ENCODE measurements at regions of chr2 and their contacts with region 1.

Region 1: GRCh38 chr2:171416009-171416926 is 17.5 kb downstream of the METTL8 start:
- DNase-seq: peak; percentile 89
- ATAC-seq: peak; percentile 100
- H3K4me3 ChIP-seq: no peak overlapping the region
- H3K27ac ChIP-seq: peak overlapping the region; percentile 48; the same call in 1 of the 2 replicates
- H3K4me1 ChIP-seq: peaks cover 9% of the 10 kb centered on the region
- H3K27me3 ChIP-seq: no peaks in the 10 kb centered on the region
- CTCF ChIP-seq: peak; percentile 92

Region 2: GRCh38 chr2:170973492-170974303 is 442.6 kb before region 1 on chr2:
- CTCF ChIA-PET with region 1: interaction called, 4 read pairs
- POLR2A ChIA-PET with region 1: interaction called, 3 read pairs
- in situ Hi-C with region 1: no loop called
- intact Hi-C with region 1: loop called (anchors 1 kb)
- DNase-seq: peak; percentile 47
- ATAC-seq: peak; percentile 95
- H3K4me3 ChIP-seq: peak overlapping the region; percentile 69 to 84
- H3K27ac ChIP-seq: peak overlapping the region; percentile 45
- H3K4me1 ChIP-seq: peaks cover 15% of the 10 kb centered on the region
- H3K27me3 ChIP-seq: no peaks in the 10 kb centered on the region
- CTCF ChIP-seq: peak; percentile 98

Region 3: DNA sequence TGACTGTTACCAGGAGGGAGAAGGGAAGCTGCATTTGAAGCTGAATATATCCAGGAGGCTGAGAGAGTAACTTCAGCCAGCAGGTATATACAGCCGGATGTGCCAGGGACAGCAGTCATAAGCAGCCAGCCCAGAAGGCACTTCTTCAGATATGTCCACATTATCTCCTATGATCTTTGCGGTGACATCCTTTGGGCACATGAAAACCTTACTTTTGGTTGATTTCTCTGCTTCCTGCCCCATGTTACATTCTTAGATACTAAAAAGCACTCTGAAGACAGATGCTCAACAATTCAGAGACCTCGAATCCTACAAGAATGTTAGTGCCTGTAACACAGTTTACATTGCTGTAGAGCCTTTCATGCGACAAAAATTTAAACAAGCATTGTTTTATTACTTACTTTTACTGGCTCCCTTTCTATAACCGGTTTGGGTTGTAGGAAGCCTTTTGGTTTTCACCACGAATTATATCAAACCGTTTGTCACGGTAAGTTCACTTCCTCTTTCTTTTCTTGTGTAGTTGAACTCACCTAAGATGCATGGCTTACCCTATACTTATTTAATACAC is 205.3 kb before region 1 on chr2:
- CTCF ChIA-PET with region 1: no interaction called
- POLR2A ChIA-PET with region 1: no interaction called
- in situ Hi-C with region 1: no loop called
- intact Hi-C with region 1: no loop called
- DNase-seq: no peak
- ATAC-seq: peak; percentile 78
- H3K4me3 ChIP-seq: no peak overlapping the region
- H3K27ac ChIP-seq: no peak overlapping the region
- H3K4me1 ChIP-seq: peaks cover 4% of the 10 kb centered on the region; the same call in 1 of the 2 replicates
- H3K27me3 ChIP-seq: no peaks in the 10 kb centered on the region
- CTCF ChIP-seq: no peak